ENCODE measurements at regions of chr1 and their contacts with region 1.

Region 1: GRCh38 chr1:13662493-13662892 is 37.5 kb upstream of the PRDM2 start:
- DNase-seq: no peak
- H3K4me3 ChIP-seq: no peak overlapping the region
- H3K27ac ChIP-seq: no peak overlapping the region
- H3K4me1 ChIP-seq: peaks cover 43% of the 10 kb centered on the region
- CTCF ChIP-seq: no peak

Region 2: DNA sequence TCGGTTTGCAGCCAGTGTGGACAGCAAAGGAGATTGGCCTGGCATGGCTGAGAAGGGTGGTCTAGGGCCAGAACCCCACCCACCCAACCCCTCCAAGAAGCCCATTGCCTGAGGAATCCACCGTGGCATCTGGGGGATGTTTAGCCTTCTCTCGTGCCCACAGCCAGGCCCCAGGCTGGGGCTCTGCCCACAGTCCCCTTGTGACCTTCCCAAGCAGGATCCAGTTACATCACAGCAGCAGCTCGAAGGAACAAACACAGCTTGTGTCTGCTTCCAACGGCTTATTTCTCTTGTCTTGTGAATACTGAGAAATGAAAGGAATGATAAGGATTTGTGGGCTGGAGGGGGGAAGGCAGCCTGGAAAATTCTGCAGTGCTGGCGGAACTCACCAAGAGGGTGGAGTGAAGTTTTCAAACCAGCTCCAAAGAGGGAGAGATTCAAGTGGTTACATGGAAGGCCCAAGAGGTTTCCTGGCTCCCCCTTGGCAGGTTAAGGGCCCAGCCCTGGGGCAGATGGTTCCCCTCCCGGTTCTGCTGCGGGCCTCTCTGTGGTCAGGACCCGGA is 1106.0 kb before region 1 on chr1:
- CTCF ChIA-PET with region 1: no interaction called
- POLR2A ChIA-PET with region 1: no interaction called
- intact Hi-C with region 1: no loop called
- DNase-seq: no peak
- H3K4me3 ChIP-seq: no peak overlapping the region
- H3K27ac ChIP-seq: no peak overlapping the region
- H3K4me1 ChIP-seq: no peaks in the 10 kb centered on the region
- CTCF ChIP-seq: no peak

Region 3: DNA sequence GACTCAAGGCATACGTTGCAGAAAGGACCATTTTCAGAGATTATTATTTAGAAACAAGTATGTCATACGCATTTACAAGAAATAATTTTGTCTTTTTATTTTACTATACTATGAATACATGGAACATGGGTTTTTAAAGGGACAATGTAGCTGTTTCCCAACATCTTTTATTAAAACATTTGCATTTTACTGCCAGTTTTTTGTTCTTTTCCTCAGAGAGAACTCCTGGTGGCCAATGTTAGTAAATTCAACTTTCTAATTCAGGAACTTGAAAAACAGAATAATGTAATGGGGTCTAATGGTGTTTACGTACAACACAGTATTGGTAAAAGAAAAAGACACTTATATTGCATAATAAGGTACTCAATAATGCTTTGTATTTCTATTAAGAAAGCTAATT is 52.4 kb after region 1 on chr1:
- CTCF ChIA-PET with region 1: no interaction called
- POLR2A ChIA-PET with region 1: no interaction called
- intact Hi-C with region 1: no loop called
- DNase-seq: no peak
- H3K4me3 ChIP-seq: no peak overlapping the region
- H3K27ac ChIP-seq: no peak overlapping the region
- H3K4me1 ChIP-seq: peaks cover 38% of the 10 kb centered on the region
- CTCF ChIP-seq: peak; percentile 56

Region 4: GRCh38 chr1:13725714-13726175 is 63.3 kb after region 1 on chr1:
- CTCF ChIA-PET with region 1: interaction called, 8 read pairs
- POLR2A ChIA-PET with region 1: interaction called, 6 read pairs
- intact Hi-C with region 1: loop called (anchors 1 kb)
- DNase-seq: peak; percentile 78
- H3K4me3 ChIP-seq: no peak overlapping the region
- H3K27ac ChIP-seq: peak overlapping the region; percentile 22
- H3K4me1 ChIP-seq: peaks cover 58% of the 10 kb centered on the region
- CTCF ChIP-seq: peak; percentile 90

Region 5: GRCh38 chr1:13807213-13807612 is 144.7 kb after region 1 on chr1:
- CTCF ChIA-PET with region 1: no interaction called
- POLR2A ChIA-PET with region 1: no interaction called
- intact Hi-C with region 1: loop called (anchors 1 kb)
- DNase-seq: peak; percentile 77
- H3K4me3 ChIP-seq: no peak overlapping the region
- H3K27ac ChIP-seq: no peak overlapping the region
- H3K4me1 ChIP-seq: peaks cover 20% of the 10 kb centered on the region
- CTCF ChIP-seq: peak; percentile 94

Region 6: DNA sequence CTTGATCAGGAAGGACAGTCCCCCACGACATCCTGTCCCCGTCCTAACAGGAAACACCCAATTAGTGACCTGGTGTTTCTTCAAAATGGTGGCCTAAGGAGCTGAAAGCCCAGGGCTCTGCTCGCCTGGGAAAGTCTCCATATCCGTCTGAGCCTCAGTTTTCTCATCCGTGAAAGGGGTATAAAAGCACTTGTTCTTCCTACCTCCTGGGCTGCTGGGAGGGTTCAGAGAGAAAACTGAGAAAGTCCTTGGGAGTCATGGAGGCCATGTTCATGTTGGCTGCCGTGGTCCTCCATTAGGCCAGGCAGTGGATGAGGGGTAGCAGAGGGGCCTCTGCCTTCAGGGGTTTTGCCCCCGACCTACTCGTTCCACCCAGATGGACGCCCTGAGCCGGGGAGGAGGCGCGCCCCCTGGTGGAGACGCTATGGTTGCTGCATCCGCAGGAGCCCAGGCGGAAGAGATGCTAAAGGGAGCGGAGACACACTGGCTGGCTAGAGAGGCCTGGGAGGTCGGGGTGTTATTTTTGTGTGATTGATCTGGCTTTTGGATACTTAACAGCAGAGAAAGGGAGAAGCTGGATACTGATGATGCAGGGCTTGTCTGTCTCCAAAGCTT is 151.0 kb after region 1 on chr1:
- CTCF ChIA-PET with region 1: interaction called, 3 read pairs
- POLR2A ChIA-PET with region 1: no interaction called
- intact Hi-C with region 1: loop called (anchors 1 kb)
- DNase-seq: peak; percentile 71
- H3K4me3 ChIP-seq: no peak overlapping the region
- H3K27ac ChIP-seq: no peak overlapping the region
- H3K4me1 ChIP-seq: peaks cover 11% of the 10 kb centered on the region
- CTCF ChIP-seq: peak; percentile 89

Region 7: GRCh38 chr1:13960375-13960987 is 298.0 kb after region 1 on chr1:
- CTCF ChIA-PET with region 1: no interaction called
- POLR2A ChIA-PET with region 1: no interaction called
- intact Hi-C with region 1: loop called (anchors 2 kb)
- DNase-seq: peak; percentile 67
- H3K4me3 ChIP-seq: no peak overlapping the region
- H3K27ac ChIP-seq: no peak overlapping the region
- H3K4me1 ChIP-seq: no peaks in the 10 kb centered on the region
- CTCF ChIP-seq: peak; percentile 96